ENCODE measurements at regions of chr1 and their contacts with region 1.

Region 1: DNA sequence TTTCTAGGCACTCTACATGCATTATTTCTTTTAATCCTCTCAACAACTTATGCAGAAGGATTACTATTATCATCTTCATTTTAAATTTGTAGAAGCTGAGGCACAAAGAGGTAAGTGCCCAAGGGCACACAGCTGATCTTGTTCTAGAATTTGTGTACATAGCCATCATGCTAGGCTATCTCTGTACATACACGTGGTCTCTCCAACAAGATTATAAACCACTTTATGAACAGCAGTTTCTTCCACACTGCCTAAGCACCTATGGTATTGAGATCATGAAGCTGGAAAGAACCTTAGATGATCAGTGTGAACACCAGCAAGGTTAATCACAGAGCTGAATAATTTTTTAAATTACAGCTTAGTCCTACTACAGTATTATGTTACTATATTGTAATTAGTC is 28.9 kb downstream of the UCHL5 start:
- DNase-seq: no peak
- H3K4me3 ChIP-seq: no peak overlapping the region
- H3K27ac ChIP-seq: no peak overlapping the region
- H3K4me1 ChIP-seq: peaks cover 8% of the 10 kb centered on the region
- CTCF ChIP-seq: no peak

Region 2: DNA sequence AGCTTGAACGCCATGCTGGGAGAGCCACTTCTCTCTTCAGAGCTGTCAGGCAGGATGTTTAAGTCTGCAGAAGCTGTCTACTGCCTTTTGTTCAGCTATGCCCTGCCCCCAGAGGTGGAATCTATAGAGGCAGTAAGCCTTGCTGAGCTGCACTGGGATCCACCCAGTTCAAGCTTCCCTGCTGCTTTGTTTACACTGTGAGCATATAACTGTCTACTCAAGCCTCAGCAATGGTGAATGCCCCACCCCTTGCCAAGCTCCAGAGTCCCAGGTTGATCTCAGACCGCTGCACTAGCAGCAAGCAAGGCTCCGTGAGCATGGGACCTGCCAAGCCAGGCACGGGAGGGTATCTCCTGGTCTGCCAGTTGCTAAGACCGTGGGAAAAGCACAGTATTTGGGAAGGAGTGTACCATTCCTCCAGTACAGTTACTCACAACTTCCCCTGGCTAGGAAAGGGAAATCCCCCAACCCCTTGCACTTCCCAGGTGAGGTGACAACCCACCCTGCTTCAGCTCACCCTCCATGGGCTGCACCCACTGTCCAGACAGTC is 361.8 kb before region 1 on chr1:
- CTCF ChIA-PET with region 1: no interaction called
- POLR2A ChIA-PET with region 1: no interaction called
- intact Hi-C with region 1: no loop called
- DNase-seq: no peak
- H3K4me3 ChIP-seq: no peak overlapping the region
- H3K27ac ChIP-seq: no peak overlapping the region
- H3K4me1 ChIP-seq: no peaks in the 10 kb centered on the region
- CTCF ChIP-seq: no peak

Region 3: DNA sequence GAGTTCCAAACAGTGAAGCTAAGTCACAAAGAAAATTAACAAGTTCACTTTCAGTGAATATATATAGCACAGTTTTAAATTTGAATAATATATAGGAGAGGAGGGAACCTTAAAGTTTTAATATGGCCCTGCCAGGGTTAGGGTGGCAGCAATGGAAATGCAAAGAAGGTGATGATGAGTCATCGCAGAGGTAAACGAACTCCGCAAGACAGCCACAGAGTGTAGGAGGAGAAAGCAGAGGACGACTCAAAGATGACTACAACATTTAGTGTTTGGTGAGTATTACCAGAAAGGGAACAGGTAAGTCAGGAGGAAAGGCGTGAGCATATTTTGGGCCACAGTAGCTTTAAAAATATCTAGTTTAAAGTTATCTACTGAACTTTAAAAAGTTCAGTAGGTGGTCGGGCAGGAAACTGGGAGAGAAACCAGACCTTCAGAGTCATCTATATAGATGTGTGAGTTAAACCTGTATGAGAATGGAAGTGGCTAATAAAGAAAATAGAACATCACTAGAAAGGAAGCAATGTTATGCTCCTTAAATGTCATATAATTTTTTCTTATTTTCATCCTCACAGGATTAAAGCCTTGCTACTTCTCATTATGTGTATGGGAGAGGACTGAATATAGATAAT is 46.8 kb before region 1 on chr1:
- CTCF ChIA-PET with region 1: no interaction called
- POLR2A ChIA-PET with region 1: no interaction called
- intact Hi-C with region 1: no loop called
- DNase-seq: no peak
- H3K4me3 ChIP-seq: no peak overlapping the region
- H3K27ac ChIP-seq: no peak overlapping the region
- H3K4me1 ChIP-seq: no peaks in the 10 kb centered on the region
- CTCF ChIP-seq: no peak

Region 4: DNA sequence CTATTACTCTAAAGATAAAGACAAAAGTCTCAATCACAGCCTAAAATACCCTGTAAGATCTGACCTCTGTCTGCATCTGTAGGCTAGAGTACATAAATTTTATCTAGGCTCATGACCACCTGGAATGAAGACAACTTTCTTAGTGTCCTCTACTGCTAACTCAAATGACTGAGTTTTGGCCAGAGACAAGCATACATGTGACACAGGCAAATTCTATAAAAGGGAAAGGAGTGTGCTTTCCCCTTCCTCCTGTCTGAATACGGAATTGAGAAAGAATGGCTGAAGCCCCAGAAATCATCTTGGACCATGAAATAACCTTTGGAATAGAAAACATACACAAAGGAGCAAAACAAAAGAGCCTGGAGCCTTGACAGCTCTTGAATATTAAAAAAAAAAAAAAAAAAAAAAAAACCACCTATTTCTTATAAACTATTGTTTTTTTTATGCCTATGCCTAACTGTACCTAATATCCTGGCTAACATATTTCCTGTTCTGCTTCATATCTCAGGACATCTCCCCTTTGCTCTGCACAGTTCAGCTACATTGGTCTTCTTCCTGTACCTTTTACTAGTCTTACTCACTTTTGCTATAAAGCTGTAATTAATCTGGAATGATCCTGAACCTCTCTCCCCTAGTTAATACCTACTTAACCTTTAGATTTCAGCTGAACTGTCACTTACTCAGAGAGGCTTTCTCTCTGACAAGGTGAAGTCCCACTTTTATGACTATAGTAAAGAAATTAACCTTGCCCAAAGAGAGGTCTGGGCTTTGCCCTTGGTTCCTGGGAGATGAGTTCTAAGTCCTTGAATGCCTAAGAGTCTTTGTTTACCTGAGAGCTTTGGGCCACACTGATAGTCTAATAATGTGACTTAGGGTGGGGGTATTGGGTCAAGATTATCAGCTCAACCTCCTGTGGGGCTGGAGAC is 12.7 kb after region 1 on chr1:
- CTCF ChIA-PET with region 1: no interaction called
- POLR2A ChIA-PET with region 1: interaction called, 10 read pairs
- intact Hi-C with region 1: no loop called
- DNase-seq: no peak
- H3K4me3 ChIP-seq: no peak overlapping the region
- H3K27ac ChIP-seq: no peak overlapping the region
- H3K4me1 ChIP-seq: no peaks in the 10 kb centered on the region
- CTCF ChIP-seq: no peak